PC-9 (cell line): ENCODE measurements at regions of chr9 and their contacts with region 1.

Region 1: GRCh38 chr9:5450359-5451091 is at the start of gene CD274:
- DNase-seq: peak; percentile 85 to 91
- H3K4me3 ChIP-seq: peak within 1 kb of the TSS; percentile 63
- H3K27ac ChIP-seq: peak within 1 kb of the TSS; percentile 90
- H3K4me1 ChIP-seq: peaks cover 84% of the 10 kb centered on the region
- H3K27me3 ChIP-seq: no peaks in the 10 kb centered on the region
- CTCF ChIP-seq: peak; percentile 51
- total RNA-seq, gene CD274: 2.3 and 4.4 TPM in 2 replicates

Region 2: GRCh38 chr9:5510360-5510931 is 59.9 kb after region 1 on chr9 and contains the start of gene PDCD1LG2:
- CTCF ChIA-PET with region 1: no interaction called
- POLR2A ChIA-PET with region 1: no interaction called
- intact Hi-C with region 1: loop called (anchors 2 kb)
- DNase-seq: peak in 1 of 2 experiments; percentile 55
- H3K4me3 ChIP-seq: peak within 1 kb of the TSS; percentile 53
- H3K27ac ChIP-seq: peak within 1 kb of the TSS; percentile 90
- H3K4me1 ChIP-seq: peaks cover 46% of the 10 kb centered on the region
- H3K27me3 ChIP-seq: no peaks in the 10 kb centered on the region
- CTCF ChIP-seq: no peak
- total RNA-seq, gene PDCD1LG2: 0.55 and 1.4 TPM in 2 replicates

Region 3: GRCh38 chr9:5586391-5586802 is 135.9 kb after region 1 on chr9:
- CTCF ChIA-PET with region 1: interaction called, 8 read pairs
- POLR2A ChIA-PET with region 1: no interaction called
- intact Hi-C with region 1: loop called (anchors 2 kb)
- DNase-seq: no peak
- H3K4me3 ChIP-seq: no peak overlapping the region
- H3K27ac ChIP-seq: no peak overlapping the region
- H3K4me1 ChIP-seq: peaks cover 14% of the 10 kb centered on the region
- H3K27me3 ChIP-seq: no peaks in the 10 kb centered on the region
- CTCF ChIP-seq: no peak

Region 4: DNA sequence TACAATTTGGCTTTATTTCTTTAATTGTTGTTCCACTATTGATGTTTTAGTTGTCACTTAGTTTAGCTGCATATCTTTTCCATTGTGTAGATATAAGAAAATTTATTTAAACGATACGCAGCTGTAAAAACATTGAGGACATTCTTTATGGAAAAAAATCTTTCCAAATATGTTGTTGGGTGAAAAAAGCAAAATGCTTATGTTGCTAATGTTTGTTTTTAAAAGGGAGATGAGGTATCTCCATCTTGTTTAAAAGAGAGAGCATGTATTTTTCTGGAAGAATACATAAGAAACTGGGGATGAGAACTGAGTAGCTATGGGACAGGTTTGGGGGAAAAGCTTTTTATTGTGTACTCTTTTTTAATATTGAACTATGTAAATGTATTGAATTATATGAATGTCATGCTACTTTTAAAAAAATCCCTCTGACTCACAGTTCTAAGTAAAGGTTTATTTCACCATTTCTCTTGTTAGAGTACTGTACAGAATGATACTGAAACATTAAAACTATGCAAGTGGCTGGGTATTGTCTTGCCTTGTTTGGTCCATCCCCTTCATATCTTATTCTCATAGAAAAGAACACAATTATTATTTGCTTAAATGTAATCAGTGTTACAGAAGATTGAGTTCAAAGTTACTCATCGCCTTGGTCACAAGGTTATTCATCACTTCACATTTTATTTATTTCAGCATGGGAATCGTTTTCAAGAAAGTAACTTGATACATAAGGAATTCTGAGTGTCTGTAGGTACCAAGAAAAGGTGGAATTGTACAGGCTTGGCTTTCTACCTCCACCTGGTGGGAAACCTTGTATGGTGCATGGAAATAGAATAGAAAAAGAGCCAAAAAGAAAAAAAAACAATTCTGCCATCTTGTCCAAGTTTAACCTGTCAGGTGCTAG is 264.2 kb after region 1 on chr9:
- CTCF ChIA-PET with region 1: no interaction called
- POLR2A ChIA-PET with region 1: no interaction called
- intact Hi-C with region 1: loop called (anchors 5 kb)
- DNase-seq: peak; percentile 2 to 37
- H3K4me3 ChIP-seq: no peak overlapping the region
- H3K27ac ChIP-seq: no peak overlapping the region
- H3K4me1 ChIP-seq: no peaks in the 10 kb centered on the region
- H3K27me3 ChIP-seq: no peaks in the 10 kb centered on the region
- CTCF ChIP-seq: peak; percentile 58